ENCODE measurements at regions of chr3 and their contacts with region 1.

Region 1: DNA sequence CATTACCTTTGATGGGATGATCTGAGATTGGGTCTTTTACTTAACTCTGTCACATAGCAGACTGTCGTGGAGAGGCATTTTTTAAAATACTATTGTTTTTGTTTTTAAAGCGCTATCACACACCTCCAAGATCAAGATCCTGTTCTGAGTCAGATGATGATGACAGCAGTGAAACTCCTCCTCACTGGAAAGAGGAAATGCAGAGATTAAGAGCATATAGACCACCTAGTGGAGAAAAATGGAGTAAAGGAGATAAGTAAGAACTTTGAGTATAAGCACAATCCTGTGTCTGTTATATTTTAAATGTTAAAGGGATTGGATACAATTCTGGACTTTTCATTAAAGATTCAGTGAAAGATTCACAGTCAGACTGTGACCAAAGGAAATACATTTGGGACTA is 18.4 kb upstream of the ZBTB47 start:
- DNase-seq: no peak
- H3K4me3 Mint-ChIP-seq: no peak overlapping the region
- H3K27ac Mint-ChIP-seq: peak overlapping the region; percentile 67
- H3K4me1 Mint-ChIP-seq: peaks cover 11% of the 10 kb centered on the region
- H3K27me3 Mint-ChIP-seq: no peaks in the 10 kb centered on the region

Region 2: GRCh38 chr3:42387802-42388651 is 247.1 kb before region 1 on chr3:
- CTCF ChIA-PET with region 1: no interaction called
- intact Hi-C with region 1: loop called (anchors 5 kb)
- DNase-seq: peak; percentile 75
- H3K4me3 Mint-ChIP-seq: peak overlapping the region; percentile 44
- H3K27ac Mint-ChIP-seq: peak overlapping the region; percentile 96
- H3K4me1 Mint-ChIP-seq: peaks cover 25% of the 10 kb centered on the region
- H3K27me3 Mint-ChIP-seq: no peaks in the 10 kb centered on the region

Region 3: GRCh38 chr3:42518800-42519567 is 116.1 kb before region 1 on chr3:
- CTCF ChIA-PET with region 1: no interaction called
- intact Hi-C with region 1: loop called (anchors 5 kb)
- DNase-seq: peak; percentile 65
- H3K4me3 Mint-ChIP-seq: no peak overlapping the region
- H3K27ac Mint-ChIP-seq: peak overlapping the region; percentile 2
- H3K4me1 Mint-ChIP-seq: peaks cover 30% of the 10 kb centered on the region
- H3K27me3 Mint-ChIP-seq: no peaks in the 10 kb centered on the region

Region 4: DNA sequence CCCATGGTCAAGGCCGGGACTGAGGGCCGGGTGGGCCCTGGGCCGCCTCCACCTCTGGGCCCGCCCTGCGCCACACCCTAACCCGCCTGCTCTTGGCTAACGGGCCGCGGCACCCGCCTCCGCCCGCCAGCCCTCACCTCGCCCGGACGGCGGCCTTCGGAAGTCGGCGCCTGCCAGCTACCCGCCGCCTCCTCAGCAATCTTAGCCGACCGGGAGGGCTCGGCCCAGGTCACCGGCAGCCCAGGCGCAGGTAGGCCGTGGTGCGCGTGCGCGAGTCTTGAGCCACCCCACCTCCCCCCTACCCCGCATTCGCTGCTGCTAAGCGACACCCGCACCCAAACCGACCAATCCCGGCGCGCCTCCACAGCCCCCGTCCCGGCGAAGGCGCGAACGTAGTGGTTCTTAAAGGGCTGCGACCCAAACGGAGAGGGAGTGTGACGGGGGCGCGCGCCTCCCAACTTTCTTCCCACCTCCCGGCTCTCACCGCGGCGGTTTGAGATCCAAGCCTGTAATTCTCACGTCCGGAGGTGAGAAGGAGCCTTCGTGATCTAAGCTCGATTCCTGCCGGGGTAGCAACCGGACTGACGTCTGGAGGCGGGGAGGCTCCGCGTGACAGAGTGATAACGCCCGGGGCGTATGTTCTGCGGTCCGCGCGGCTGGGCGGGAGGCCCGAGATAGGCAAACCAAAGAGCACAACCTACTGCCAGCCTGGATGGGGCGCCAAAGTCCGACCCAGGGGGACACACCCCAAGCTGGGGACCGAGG is 53.2 kb before region 1 on chr3 and contains the start of gene SEC22C:
- CTCF ChIA-PET with region 1: interaction called, 15 read pairs
- intact Hi-C with region 1: loop called (anchors 1 kb)
- DNase-seq: peak; percentile 97
- H3K4me3 Mint-ChIP-seq: peak within 1 kb of the TSS; percentile 90
- H3K27ac Mint-ChIP-seq: peak within 1 kb of the TSS; percentile 93
- H3K4me1 Mint-ChIP-seq: peaks cover 39% of the 10 kb centered on the region
- H3K27me3 Mint-ChIP-seq: no peaks in the 10 kb centered on the region
- total RNA-seq, gene SEC22C: 41.2 to 45.9 TPM

Region 5: GRCh38 chr3:42600111-42600988 is 34.8 kb before region 1 on chr3 and contains the start of gene NKTR:
- CTCF ChIA-PET with region 1: interaction called, 16 read pairs
- intact Hi-C with region 1: loop called (anchors 1 kb)
- DNase-seq: peak; percentile 99
- H3K4me3 Mint-ChIP-seq: peak within 1 kb of the TSS; percentile 96
- H3K27ac Mint-ChIP-seq: peak within 1 kb of the TSS; percentile 99
- H3K4me1 Mint-ChIP-seq: peaks cover 27% of the 10 kb centered on the region
- H3K27me3 Mint-ChIP-seq: no peaks in the 10 kb centered on the region
- total RNA-seq, gene NKTR: 62.1 to 65.9 TPM

Region 6: GRCh38 chr3:42683875-42684598 is 48.9 kb after region 1 on chr3:
- CTCF ChIA-PET with region 1: no interaction called
- intact Hi-C with region 1: loop called (anchors 1 kb)
- DNase-seq: peak; percentile 72
- H3K4me3 Mint-ChIP-seq: no peak overlapping the region
- H3K27ac Mint-ChIP-seq: no peak overlapping the region
- H3K4me1 Mint-ChIP-seq: peaks cover 3% of the 10 kb centered on the region
- H3K27me3 Mint-ChIP-seq: peaks cover 27% of the 10 kb centered on the region

Region 7: DNA sequence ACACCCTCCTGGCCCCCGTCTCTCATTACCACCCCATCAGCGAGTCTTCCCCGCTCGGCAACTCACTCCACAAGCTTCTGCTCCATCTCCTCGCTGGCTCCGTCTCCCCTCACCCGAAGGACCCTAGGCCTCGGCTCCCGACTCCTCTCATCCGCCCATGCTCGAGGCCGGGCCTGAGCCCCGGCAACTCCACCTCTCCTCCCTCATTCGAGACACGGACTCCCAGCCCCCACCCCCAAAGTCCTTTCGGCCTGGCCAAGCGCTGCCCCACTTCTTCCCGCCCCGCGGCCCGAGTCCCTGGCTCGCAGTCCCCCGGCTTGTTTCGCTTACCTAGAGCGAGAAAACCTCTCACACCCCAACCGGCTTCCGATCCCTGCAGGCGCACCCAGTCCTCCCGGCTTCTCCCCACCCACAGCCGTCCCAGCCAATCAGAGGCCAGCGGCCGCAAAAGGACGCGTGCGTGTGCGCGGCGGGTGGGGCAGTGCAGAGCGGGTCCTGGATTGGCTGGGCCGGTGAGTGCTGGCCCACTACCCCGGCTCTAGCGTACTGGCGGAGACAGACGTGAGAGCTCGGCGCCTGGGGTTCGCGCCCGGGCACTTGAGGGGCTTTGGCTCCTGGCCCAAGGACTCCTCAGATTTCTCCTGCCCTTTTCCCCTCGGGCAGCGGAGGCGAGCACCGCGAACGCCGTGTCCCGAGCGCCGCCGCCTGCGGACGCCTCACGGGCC is 169.2 kb after region 1 on chr3 and contains the start of gene HIGD1A:
- CTCF ChIA-PET with region 1: no interaction called
- intact Hi-C with region 1: loop called (anchors 2 kb)
- DNase-seq: peak; percentile 95
- H3K4me3 Mint-ChIP-seq: peak within 1 kb of the TSS; percentile 96
- H3K27ac Mint-ChIP-seq: peak within 1 kb of the TSS; percentile 86
- H3K4me1 Mint-ChIP-seq: peaks cover 42% of the 10 kb centered on the region
- H3K27me3 Mint-ChIP-seq: peaks cover 11% of the 10 kb centered on the region
- total RNA-seq, gene HIGD1A: 57.1 to 66.4 TPM